Activated naive CD4-positive, alpha-beta T cell treated with anti-CD3 and anti-CD28 coated beads for 36 hours (primary cell): ENCODE measurements at regions of chr5 and their contacts with region 1.

Region 1: GRCh38 chr5:77560677-77561263 is 68.7 kb upstream of the WDR41 start:
- DNase-seq: no peak
- H3K4me3 Mint-ChIP-seq: no peak overlapping the region
- H3K27ac Mint-ChIP-seq: no peak overlapping the region
- H3K4me1 Mint-ChIP-seq: no peaks in the 10 kb centered on the region
- H3K27me3 Mint-ChIP-seq: no peaks in the 10 kb centered on the region

Region 2: DNA sequence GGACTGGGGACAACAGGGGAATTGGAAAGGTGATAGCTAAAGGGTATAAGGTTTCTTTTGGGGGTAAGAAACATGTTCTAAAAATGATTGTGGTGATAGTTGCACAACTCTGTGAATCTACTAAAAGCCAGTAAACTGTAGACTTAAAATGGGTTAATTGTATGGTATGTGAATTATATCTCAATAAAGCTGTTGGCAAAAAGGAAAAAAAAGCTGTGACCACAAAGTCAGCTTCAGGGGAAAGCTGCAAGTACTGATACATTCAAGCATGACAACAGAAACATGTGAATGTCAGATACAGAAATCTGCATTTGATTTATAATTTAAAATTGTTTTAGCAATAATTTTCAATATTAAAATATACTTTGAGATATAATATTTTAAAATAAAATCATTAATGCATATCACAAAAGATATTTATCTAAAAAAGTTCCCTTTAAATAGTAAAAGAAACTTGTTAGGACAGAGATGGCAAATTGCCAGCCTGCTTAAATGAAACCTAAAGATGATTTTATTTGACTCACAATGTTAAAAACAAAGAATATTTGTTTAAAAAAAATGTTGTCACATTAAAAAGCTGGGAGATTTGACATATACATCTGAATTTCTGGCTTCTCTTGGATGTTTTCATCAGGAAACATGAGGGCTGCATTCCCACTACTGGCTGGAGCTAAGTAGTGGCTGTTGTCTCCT is 149.4 kb after region 1 on chr5:
- CTCF ChIA-PET with region 1: no interaction called
- intact Hi-C with region 1: no loop called
- DNase-seq: no peak
- H3K4me3 Mint-ChIP-seq: no peak overlapping the region
- H3K27ac Mint-ChIP-seq: no peak overlapping the region
- H3K4me1 Mint-ChIP-seq: peaks cover 3% of the 10 kb centered on the region
- H3K27me3 Mint-ChIP-seq: no peaks in the 10 kb centered on the region

Region 3: GRCh38 chr5:77844623-77845323 is 284.0 kb after region 1 on chr5:
- CTCF ChIA-PET with region 1: no interaction called
- intact Hi-C with region 1: loop called (anchors 5 kb)
- DNase-seq: no peak
- H3K4me3 Mint-ChIP-seq: peak overlapping the region; percentile 59
- H3K27ac Mint-ChIP-seq: no peak overlapping the region
- H3K4me1 Mint-ChIP-seq: peaks cover 8% of the 10 kb centered on the region
- H3K27me3 Mint-ChIP-seq: peaks cover 49% of the 10 kb centered on the region

Region 4: DNA sequence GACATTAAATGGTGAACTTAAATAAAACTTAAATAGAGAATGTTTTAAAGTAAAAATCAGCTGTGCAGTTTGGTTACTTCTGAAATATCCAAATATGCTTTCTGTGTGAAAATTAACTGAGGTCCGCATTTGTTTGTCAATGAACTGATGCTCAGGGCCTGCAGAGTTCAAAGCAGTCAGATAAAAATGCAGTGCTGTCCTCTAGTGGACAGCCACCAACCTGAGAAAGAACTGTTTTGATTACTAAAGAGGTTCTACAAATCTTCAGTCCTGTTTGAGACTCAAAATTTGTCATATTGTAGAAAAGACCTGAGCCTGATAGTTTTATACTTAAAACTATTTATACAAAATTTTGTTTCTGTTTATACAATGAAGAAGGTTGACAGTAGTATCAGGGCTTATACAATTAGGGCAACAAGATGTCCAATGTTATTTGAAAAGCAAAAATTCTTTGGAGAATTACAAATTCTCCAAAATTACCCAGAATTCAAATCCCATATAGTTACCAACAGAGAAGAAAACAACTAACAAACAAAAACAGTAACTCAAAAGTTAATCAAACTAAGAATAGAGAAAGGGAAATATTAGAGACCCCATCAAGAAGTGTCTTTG is 447.7 kb after region 1 on chr5:
- CTCF ChIA-PET with region 1: no interaction called
- intact Hi-C with region 1: loop called (anchors 5 kb)
- DNase-seq: peak; percentile 23
- H3K4me3 Mint-ChIP-seq: no peak overlapping the region
- H3K27ac Mint-ChIP-seq: no peak overlapping the region
- H3K4me1 Mint-ChIP-seq: no peaks in the 10 kb centered on the region
- H3K27me3 Mint-ChIP-seq: no peaks in the 10 kb centered on the region

Region 5: DNA sequence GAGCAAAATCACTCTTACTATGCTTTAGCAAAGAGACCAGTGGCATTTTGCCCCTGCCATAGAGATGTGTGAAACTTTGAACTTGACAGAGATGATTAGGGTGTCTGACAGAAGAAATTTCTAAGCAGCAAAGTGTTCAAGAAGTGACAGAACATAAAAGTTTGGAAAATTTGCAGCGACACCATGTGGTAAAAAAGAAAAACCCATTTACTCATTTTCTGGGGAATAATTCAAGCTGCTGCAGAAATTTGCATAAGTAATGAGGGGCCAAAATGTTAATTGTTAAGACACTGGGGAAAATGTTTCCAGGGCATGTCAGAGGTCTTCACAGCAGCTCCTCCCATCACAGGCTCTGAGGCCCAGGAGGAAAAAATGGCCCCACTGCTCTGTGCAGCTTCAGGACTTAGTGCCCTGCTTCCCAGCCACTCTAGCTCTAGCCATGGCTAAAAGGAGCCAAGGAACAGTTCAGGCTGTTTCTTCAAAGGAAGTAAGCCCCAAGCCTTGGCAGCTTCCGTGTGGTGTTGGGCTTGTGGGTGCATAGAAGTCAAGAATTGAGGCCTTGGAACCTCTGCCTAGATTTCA is 739.8 kb after region 1 on chr5:
- CTCF ChIA-PET with region 1: interaction called, 3 read pairs
- intact Hi-C with region 1: loop called (anchors 1 kb)
- DNase-seq: no peak
- H3K4me3 Mint-ChIP-seq: no peak overlapping the region
- H3K27ac Mint-ChIP-seq: no peak overlapping the region
- H3K4me1 Mint-ChIP-seq: peaks cover 4% of the 10 kb centered on the region
- H3K27me3 Mint-ChIP-seq: peaks cover 3% of the 10 kb centered on the region